GM10248 (cell line): ENCODE measurements at regions of chr2 and their contacts with region 1.

Region 1: DNA sequence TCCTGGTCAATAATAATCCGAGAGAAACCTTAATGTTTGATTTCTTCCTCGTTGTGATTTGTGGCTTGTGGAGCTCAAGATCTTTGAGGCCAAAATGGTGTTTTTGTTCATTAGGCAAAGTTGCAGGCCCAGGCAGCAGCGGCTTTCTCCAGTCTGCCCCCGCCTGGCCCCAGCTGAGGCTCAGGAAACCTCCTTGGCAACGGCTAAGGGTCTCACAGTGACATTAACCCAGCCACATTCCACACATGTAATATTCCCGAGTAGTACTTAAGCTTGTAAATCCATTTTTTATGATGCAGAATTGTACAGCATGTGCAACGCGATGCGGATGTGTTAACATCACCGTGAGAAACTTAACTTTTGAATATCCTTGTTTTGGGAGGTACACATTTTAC is 200.1 kb downstream of the BCL11A start:
- DNase-seq: no peak
- CTCF ChIP-seq: no peak

Region 2: GRCh38 chr2:59824314-59824713 is 529.1 kb before region 1 on chr2:
- CTCF ChIA-PET with region 1: no interaction called
- POLR2A ChIA-PET with region 1: no interaction called
- DNase-seq: no peak
- CTCF ChIP-seq: no peak

Region 3: DNA sequence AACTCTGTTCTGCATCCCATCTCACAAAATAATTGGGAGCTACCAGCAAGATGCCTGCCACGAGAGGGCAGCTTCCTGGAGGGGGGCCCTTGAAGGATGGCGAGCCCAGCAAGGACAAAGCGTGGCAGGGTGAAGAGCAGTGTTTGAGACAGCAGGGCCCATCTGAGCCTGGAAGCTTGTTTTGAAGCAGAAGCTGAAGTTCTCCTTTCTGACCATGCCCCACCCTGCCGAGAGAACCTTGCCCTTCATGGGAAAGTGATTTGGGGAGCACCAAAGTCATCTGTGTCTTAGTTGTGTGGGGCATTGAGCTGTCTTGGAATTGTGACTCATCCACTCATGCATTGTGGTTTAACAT is 16.3 kb before region 1 on chr2:
- CTCF ChIA-PET with region 1: interaction called, 13 read pairs
- POLR2A ChIA-PET with region 1: no interaction called
- DNase-seq: no peak
- CTCF ChIP-seq: no peak

Region 4: DNA sequence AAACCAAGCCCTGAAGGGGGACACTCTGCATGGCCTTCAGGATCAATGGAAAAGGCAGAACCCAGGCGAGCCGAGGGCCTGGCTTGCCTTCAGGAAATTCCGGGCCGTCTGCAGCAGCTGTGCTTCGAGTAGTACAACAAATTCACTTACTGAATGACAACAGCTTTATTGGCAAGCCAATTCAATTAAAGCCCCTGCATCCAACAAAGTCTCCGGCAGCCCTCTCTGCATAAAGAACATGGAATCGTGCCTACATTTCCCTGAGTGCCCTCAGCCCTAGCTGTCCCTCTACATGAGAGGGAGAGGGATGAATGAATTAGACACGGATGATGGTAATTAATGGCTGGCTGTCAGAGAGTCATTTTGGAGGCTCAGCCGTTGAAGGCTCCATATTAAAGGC is 11.1 kb after region 1 on chr2:
- CTCF ChIA-PET with region 1: interaction called, 11 read pairs
- POLR2A ChIA-PET with region 1: no interaction called
- DNase-seq: no peak
- CTCF ChIP-seq: no peak